Lower leg skin (tissue), 4 donors: ENCODE measurements at regions of chr12 and their contacts with region 1.

Region 1: GRCh38 chr12:8890313-8891085 is 23.8 kb upstream of the PHC1 start:
- DNase-seq: peak; percentile 30 to 88
- H3K4me3 ChIP-seq: no peak overlapping the region
- CTCF ChIP-seq: peak in 1 of 3 donors; percentile 70
- POLR2A ChIP-seq: no peak

Region 2: DNA sequence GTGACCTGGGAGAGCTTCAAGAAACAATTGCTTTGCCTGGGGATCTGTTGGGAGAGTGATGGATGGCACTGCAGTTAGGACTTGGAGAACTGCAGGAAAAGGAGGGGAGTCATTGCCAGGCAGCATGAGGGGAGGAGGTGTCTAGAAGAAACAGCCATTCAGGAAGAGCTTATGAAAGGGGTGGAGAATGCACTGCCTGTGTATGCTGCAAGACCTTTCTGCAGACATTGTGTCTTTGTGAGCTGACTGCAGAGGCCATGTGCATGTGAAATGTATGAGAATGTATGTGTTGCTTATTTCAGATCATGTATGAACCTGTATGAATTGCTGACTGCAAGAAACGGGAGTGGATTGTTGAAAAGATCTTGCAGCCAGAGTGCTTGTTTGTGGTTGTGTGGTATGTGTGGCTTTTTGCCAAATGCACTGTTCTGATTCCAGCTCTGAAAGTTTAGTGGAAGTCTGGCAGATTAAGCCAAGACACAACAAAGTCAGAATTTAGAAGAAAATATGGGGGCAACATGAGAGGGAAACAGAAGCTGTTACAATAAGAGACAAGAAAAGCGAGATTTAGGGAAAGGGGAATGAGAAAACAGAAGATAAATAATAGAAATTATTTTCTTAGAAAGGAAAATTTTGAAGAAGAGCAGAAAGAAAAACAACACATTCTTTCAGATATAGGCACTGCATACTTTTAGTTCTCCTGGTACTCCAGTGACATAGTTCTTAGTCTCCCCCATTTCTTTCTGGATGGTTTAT is 202.5 kb before region 1 on chr12:
- intact Hi-C with region 1: loop called (anchors 10 kb)
- DNase-seq: no peak
- H3K4me3 ChIP-seq: no peak overlapping the region
- CTCF ChIP-seq: no peak
- POLR2A ChIP-seq: no peak